GM12878 (cell line): ENCODE measurements at regions of chr6 and their contacts with region 1.

Region 1: GRCh38 chr6:15254070-15254841 is 8.4 kb downstream of the JARID2 start:
- DNase-seq: peak; percentile 82
- ATAC-seq: peak; percentile 50
- H3K4me3 ChIP-seq: peak overlapping the region; percentile 42; the same call in 1 of the 2 replicates
- H3K27ac ChIP-seq: peak overlapping the region; percentile 92
- H3K4me1 ChIP-seq: peaks cover 78% of the 10 kb centered on the region
- H3K27me3 ChIP-seq: no peaks in the 10 kb centered on the region
- CTCF ChIP-seq: peak; percentile 40 to 65 (median 50); a peak in 5 of 6 replicates
- EP300 ChIP-seq: peak in 1 of 2 experiments; percentile 27; a peak in 1 of 4 replicates
- POLR2A ChIP-seq: no peak
- RAD21 ChIP-seq: peak; percentile 71

Region 2: GRCh38 chr6:14129575-14129974 is 1124.7 kb before region 1 on chr6:
- CTCF ChIA-PET with region 1: interaction called, 3 read pairs
- POLR2A ChIA-PET with region 1: interaction called, 3 read pairs
- RAD21 ChIA-PET with region 1: interaction called, 3 read pairs
- SMC1A ChIA-PET with region 1: no interaction called
- in situ Hi-C with region 1: no loop called
- intact Hi-C with region 1: loop called (anchors 10 kb)
- DNase-seq: no peak
- ATAC-seq: peak; percentile 47
- H3K4me3 ChIP-seq: no peak overlapping the region
- H3K27ac ChIP-seq: no peak overlapping the region
- H3K4me1 ChIP-seq: peaks cover 6% of the 10 kb centered on the region
- H3K27me3 ChIP-seq: no peaks in the 10 kb centered on the region
- CTCF ChIP-seq: peak; percentile 41 to 72 (median 56)
- EP300 ChIP-seq: no peak
- POLR2A ChIP-seq: no peak
- RAD21 ChIP-seq: peak; percentile 67

Region 3: GRCh38 chr6:15287670-15288375 is 33.6 kb after region 1 on chr6:
- CTCF ChIA-PET with region 1: interaction called, 15 read pairs
- POLR2A ChIA-PET with region 1: interaction called, 6 read pairs
- RAD21 ChIA-PET with region 1: interaction called, 11 read pairs
- SMC1A ChIA-PET with region 1: interaction called, 23 read pairs
- in situ Hi-C with region 1: no loop called
- intact Hi-C with region 1: no loop called
- DNase-seq: peak; percentile 78
- ATAC-seq: peak; percentile 99
- H3K4me3 ChIP-seq: peak overlapping the region; percentile 11; the same call in 1 of the 2 replicates
- H3K27ac ChIP-seq: peak overlapping the region; percentile 79
- H3K4me1 ChIP-seq: peaks cover 24% of the 10 kb centered on the region
- H3K27me3 ChIP-seq: no peaks in the 10 kb centered on the region
- CTCF ChIP-seq: no peak
- EP300 ChIP-seq: peak in 1 of 2 experiments; percentile 78; a peak in 2 of 4 replicates
- POLR2A ChIP-seq: no peak
- RAD21 ChIP-seq: no peak

Region 4: GRCh38 chr6:15317934-15318902 is 64.0 kb after region 1 on chr6:
- CTCF ChIA-PET with region 1: interaction called, 5 read pairs
- POLR2A ChIA-PET with region 1: interaction called, 7 read pairs
- RAD21 ChIA-PET with region 1: interaction called, 66 read pairs
- SMC1A ChIA-PET with region 1: interaction called, 90 read pairs
- in situ Hi-C with region 1: no loop called
- intact Hi-C with region 1: no loop called
- DNase-seq: no peak
- ATAC-seq: peak; percentile 52
- H3K4me3 ChIP-seq: peak overlapping the region; percentile 44; the same call in 1 of the 2 replicates
- H3K27ac ChIP-seq: peak overlapping the region; percentile 82
- H3K4me1 ChIP-seq: peaks cover 73% of the 10 kb centered on the region
- H3K27me3 ChIP-seq: no peaks in the 10 kb centered on the region
- CTCF ChIP-seq: no peak
- EP300 ChIP-seq: no peak
- POLR2A ChIP-seq: no peak
- RAD21 ChIP-seq: no peak

Region 5: GRCh38 chr6:15434823-15435380 is 180.6 kb after region 1 on chr6:
- CTCF ChIA-PET with region 1: interaction called, 10 read pairs
- POLR2A ChIA-PET with region 1: interaction called, 3 read pairs
- RAD21 ChIA-PET with region 1: interaction called, 18 read pairs
- SMC1A ChIA-PET with region 1: interaction called, 39 read pairs
- in situ Hi-C with region 1: no loop called
- intact Hi-C with region 1: loop called (anchors 5 kb)
- DNase-seq: no peak
- ATAC-seq: peak; percentile 38
- H3K4me3 ChIP-seq: peak overlapping the region; percentile 9; the same call in 1 of the 2 replicates
- H3K27ac ChIP-seq: peak overlapping the region; percentile 59
- H3K4me1 ChIP-seq: peaks cover 68% of the 10 kb centered on the region
- H3K27me3 ChIP-seq: no peaks in the 10 kb centered on the region
- CTCF ChIP-seq: no peak
- EP300 ChIP-seq: 0 out of 4 replicates have a peak, but pooled peaks have one; percentile 21 to 54
- POLR2A ChIP-seq: no peak
- RAD21 ChIP-seq: no peak

Region 6: GRCh38 chr6:15491255-15491985 is 237.2 kb after region 1 on chr6:
- CTCF ChIA-PET with region 1: interaction called, 11 read pairs
- POLR2A ChIA-PET with region 1: no interaction called
- RAD21 ChIA-PET with region 1: no interaction called
- SMC1A ChIA-PET with region 1: interaction called, 4 read pairs
- in situ Hi-C with region 1: no loop called
- intact Hi-C with region 1: loop called (anchors 2 kb)
- DNase-seq: peak; percentile 17
- ATAC-seq: peak; percentile 94
- H3K4me3 ChIP-seq: no peak overlapping the region
- H3K27ac ChIP-seq: no peak overlapping the region
- H3K4me1 ChIP-seq: no peaks in the 10 kb centered on the region
- H3K27me3 ChIP-seq: no peaks in the 10 kb centered on the region
- CTCF ChIP-seq: peak; percentile 86 to 87 (median 86)
- EP300 ChIP-seq: no peak
- POLR2A ChIP-seq: no peak
- RAD21 ChIP-seq: peak; percentile 91